Posterior vena cava (tissue), 2 donors: ENCODE measurements at regions of chr7 and their contacts with region 1.

Region 1: DNA sequence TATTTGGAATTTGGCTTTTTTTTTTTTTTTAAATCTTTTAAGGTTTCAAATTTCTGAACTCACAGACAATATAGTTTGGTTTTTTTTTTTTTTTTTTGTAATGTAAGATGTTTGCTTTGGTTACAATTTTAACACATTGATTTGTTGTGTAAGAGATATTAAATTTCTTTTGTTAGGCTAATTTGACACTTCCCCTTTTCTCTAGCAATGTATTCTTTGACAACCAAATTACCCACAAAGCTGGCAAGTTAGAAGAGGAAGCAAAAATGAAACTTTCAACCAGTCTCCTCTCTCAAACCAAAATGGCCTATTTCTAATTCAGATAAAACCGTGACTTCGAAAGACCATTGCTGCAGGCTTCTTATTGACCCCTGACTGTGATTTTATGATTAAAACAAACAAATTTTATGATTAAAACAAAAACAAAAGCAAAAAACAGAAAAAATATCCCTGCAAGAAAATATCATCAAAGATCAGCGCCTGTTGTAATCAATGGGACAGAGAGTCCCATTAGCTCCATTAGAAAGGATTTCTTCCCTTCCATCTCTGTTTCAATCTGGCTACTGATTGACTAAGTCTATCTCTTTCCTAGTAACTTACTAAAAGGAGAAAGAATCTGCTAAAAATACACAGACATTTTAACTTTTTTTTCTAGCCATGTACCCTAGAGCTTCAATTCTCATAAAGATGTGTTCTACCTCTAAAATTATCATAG is 489.2 kb downstream of the MDFIC start:
- DNase-seq: no peak

Region 2: DNA sequence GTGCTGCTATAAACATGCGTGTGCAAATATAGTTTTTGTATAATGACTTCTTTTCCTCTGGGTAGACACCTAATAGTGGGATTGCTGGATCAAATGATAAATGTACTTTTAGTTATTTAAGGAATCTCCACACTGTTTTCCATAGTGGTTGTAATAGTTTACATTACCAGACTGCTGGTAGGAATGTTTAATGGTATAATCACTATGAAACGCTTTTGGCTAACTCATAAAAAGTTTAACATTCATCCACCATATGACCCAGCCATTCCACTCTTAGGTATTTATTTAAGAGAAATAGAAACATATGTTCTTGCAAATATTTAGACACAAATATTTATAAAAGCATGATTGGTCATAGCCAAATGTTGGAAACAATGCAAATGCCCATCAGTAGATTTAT is 651.5 kb after region 1 on chr7:
- intact Hi-C with region 1: loop called in 1 of 2 experiments (anchors 10 kb)
- DNase-seq: no peak